IMR-90 (cell line): ENCODE measurements at regions of chr5 and their contacts with region 1.

Region 1: GRCh38 chr5:8457187-8458037 is 588.5 kb downstream of the MTRR start:
- DNase-seq: peak; percentile 98
- ATAC-seq: peak; percentile 98
- H3K4me3 ChIP-seq: peak overlapping the region; percentile 82
- H3K27ac ChIP-seq: peak overlapping the region; percentile 71
- H3K4me1 ChIP-seq: 0 out of 2 replicates have a peak, but pooled peaks cover 2% of the 10 kb centered on the region
- H3K27me3 ChIP-seq: no peaks in the 10 kb centered on the region
- CTCF ChIP-seq: no peak
- POLR2A ChIP-seq: peak; percentile 76
- RAD21 ChIP-seq: no peak

Region 2: GRCh38 chr5:8729437-8729836 is 272.0 kb after region 1 on chr5:
- CTCF ChIA-PET with region 1: no interaction called
- POLR2A ChIA-PET with region 1: no interaction called
- dilution Hi-C with region 1: no loop called
- in situ Hi-C with region 1: no loop called
- intact Hi-C with region 1: loop called (anchors 5 kb)
- DNase-seq: peak; percentile 68
- ATAC-seq: peak; percentile 69
- H3K4me3 ChIP-seq: no peak overlapping the region
- H3K27ac ChIP-seq: no peak overlapping the region
- H3K4me1 ChIP-seq: peaks cover 6% of the 10 kb centered on the region; the same call in 1 of the 2 replicates
- H3K27me3 ChIP-seq: no peaks in the 10 kb centered on the region
- CTCF ChIP-seq: no peak
- POLR2A ChIP-seq: no peak
- RAD21 ChIP-seq: no peak

Region 3: GRCh38 chr5:9082996-9083395 is 625.6 kb after region 1 on chr5:
- CTCF ChIA-PET with region 1: no interaction called
- POLR2A ChIA-PET with region 1: no interaction called
- dilution Hi-C with region 1: no loop called
- in situ Hi-C with region 1: no loop called
- intact Hi-C with region 1: no loop called
- DNase-seq: peak; percentile 18
- ATAC-seq: no peak
- H3K4me3 ChIP-seq: no peak overlapping the region
- H3K27ac ChIP-seq: no peak overlapping the region
- H3K4me1 ChIP-seq: no peaks in the 10 kb centered on the region
- H3K27me3 ChIP-seq: no peaks in the 10 kb centered on the region
- CTCF ChIP-seq: no peak
- POLR2A ChIP-seq: no peak
- RAD21 ChIP-seq: no peak